ENCODE measurements at regions of chr17 and their contacts with region 1.

Region 1: DNA sequence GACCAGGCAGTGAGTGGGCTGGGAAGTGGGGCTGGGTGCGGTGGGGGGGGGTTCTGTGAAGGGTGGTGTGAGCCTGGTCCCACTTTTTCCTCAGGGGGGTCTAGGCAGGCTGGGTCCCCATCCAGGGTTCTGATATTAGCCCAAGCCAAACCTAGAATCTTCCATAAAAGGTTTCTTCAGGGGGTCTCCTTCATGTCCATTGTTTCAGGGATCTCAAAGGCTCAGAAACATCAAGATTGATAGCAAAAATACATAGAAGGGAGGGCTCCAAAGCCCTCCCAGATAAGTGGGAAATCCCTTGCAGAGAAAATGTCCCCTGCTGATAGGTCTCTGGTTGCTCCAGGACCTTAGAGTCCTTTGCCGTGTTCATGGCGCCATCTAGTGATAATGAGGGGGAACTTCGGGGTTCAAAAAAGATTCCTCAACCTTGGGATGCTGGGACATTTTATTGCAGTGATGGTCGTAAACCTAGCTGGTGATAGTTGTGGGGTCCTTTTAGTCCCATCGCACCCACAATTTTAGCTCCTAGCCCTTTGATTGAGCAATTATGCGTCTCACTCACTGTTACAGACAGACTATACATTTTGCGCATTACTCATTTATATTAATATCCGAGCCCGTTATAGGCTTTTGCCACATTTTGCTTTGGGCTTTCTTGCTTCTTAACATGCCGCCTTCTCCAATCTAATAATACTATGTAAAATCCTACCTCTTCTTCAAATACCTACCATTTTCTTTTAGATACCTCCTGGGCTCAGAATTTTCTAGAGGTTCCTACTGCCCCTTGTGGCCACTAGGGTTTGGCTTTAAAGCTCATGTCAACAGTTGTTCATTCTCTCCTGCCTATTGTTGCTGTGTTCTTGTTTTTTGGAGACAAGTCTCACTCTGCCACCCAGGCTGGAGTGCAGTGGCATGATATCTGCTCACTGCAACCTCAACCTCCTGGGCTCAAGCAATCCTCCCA is 35.1 kb downstream of the IGF2BP1 start:
- DNase-seq: no peak
- H3K4me3 ChIP-seq: no peak overlapping the region
- CTCF ChIP-seq: peak; percentile 73

Region 2: DNA sequence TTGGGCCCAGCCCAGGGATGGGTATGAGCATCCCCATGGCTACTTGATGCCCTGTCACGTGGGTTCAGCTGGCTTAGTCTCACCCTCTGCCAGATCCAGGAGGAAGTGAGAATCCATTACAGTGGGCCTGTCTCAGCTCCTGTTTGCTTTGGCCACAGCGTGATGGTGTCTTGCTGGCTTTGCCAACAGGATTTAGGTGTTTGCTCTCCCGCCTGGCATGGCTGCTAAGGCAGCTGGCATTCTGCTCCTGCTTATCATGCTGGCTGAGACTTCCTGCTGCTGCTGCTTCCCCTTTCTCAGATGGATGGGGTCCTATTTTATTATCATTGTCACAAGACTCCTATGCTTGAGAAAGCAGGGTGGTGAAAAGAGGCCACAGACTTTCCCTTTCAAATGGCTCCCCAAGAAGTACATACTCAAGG is 275.4 kb before region 1 on chr17:
- CTCF ChIA-PET with region 1: no interaction called
- POLR2A ChIA-PET with region 1: no interaction called
- DNase-seq: no peak
- H3K4me3 ChIP-seq: no peak overlapping the region
- CTCF ChIP-seq: no peak

Region 3: DNA sequence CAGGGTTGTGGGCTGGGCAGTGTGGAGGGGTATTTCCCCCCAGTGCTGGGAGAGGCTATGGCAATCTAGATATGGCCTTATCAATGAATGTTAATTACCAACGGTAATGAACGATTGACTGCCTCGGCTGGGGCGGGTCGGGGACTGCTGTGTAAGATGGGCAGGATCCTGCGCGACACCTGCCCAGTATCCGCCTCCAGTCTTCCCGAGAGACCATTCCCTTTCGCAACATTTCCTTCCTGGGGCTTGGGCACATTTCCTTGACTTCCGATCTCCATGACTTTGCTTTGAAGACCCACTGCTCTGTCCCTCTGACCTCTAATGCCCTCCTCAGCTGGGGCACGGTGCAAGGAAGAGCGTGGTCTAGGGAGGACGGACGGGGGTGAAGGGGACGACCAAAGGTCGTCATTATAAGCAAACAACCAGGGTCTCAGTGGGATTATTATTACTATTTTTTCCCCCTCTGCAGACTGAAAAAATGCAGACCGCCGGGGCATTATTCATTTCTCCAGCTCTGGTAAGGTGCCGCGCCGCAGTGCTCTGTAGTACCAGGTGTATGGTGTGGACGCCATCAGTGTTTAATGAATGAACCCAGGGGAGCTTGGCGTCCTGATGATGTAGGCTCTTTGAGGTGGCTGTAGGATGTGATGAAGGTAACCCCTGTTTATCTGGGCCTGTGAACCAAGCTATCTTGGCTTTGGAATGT is 139.2 kb before region 1 on chr17:
- CTCF ChIA-PET with region 1: interaction called, 22 read pairs
- POLR2A ChIA-PET with region 1: no interaction called
- DNase-seq: no peak
- H3K4me3 ChIP-seq: peak overlapping the region; percentile 97
- CTCF ChIP-seq: no peak

Region 4: GRCh38 chr17:48915459-48916282 is 116.6 kb before region 1 on chr17:
- CTCF ChIA-PET with region 1: interaction called, 10 read pairs
- POLR2A ChIA-PET with region 1: no interaction called
- DNase-seq: peak; percentile 72
- H3K4me3 ChIP-seq: peak overlapping the region; percentile 20; the same call in 1 of the 2 replicates
- CTCF ChIP-seq: no peak

Region 5: DNA sequence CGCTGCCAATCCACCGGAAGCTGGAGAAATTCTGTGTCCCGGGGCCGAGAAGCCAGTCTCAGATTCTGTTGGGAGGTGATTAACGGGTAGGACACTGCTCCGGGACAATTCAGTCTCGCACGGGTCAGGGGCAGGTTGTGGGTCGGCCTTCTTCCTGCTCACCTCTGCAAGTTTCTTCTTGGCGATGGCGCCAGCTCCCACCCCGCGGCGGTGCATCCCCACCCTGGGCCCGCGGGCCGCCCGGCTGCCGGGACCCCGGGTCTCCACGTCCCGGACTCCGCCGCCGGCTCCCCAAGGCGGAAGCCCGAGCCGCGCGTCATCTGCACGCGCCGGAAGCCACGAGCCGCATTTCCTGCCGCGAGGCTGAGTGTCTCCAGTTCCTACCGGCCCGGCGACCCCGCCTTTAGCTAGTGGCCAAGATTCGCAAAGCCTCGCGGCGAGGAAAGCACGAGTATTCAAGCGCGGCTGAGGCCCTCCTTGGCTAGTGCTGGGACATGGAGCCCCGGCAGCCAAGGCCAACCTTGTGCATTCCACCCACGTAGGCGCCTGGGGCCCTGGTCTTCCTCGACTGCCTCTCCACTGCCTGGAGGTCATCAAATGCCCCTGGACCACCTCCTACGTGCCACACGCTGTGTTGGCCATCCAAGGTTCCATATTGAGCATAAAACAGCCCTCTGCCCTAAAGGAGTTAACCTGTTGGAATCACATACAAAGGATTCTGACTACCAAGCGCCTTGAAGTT is 87.6 kb before region 1 on chr17 and contains the start of gene SNF8:
- CTCF ChIA-PET with region 1: interaction called, 112 read pairs
- POLR2A ChIA-PET with region 1: interaction called, 3 read pairs
- DNase-seq: peak; percentile 21
- H3K4me3 ChIP-seq: peak within 1 kb of the TSS; percentile 76
- CTCF ChIP-seq: no peak

Region 6: GRCh38 chr17:48961516-48962233 is 70.6 kb before region 1 on chr17:
- CTCF ChIA-PET with region 1: interaction called, 39 read pairs
- POLR2A ChIA-PET with region 1: no interaction called
- DNase-seq: no peak
- H3K4me3 ChIP-seq: no peak overlapping the region
- CTCF ChIP-seq: no peak

Region 7: GRCh38 chr17:49016788-49017463 is 15.3 kb before region 1 on chr17:
- CTCF ChIA-PET with region 1: interaction called, 46 read pairs
- POLR2A ChIA-PET with region 1: no interaction called
- DNase-seq: no peak
- H3K4me3 ChIP-seq: no peak overlapping the region
- CTCF ChIP-seq: no peak

Region 8: DNA sequence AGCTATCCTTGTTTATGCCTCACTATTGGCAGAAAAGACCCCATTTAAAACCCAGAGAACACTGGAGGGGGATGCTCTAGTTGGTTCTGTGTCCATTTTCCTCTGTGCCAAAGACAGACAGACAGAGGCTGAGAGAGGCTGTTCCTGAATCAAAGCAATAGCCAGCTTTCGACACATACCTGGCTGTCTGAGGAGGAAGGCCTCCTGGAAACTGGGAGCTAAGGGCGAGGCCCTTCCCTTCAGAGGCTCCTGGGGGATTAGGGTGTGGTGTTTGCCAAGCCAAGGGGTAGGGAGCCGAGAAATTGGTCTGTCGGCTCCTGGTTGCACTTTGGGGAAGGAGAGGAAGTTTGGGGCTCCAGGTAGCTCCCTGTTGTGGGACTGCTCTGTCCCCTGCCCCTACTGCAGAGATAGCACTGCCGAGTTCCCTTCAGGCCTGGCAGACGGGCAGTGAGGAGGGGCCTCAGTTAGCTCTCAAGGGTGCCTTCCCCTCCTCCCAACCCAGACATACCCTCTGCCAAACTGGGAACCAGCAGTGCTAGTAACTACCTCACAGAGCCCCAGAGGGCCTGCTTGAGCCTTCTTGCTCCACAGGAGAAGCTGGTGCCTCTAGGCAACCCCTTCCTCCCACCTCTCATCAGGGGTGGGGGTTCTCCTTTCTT is 21.1 kb after region 1 on chr17:
- CTCF ChIA-PET with region 1: interaction called, 14 read pairs
- POLR2A ChIA-PET with region 1: no interaction called
- DNase-seq: no peak
- H3K4me3 ChIP-seq: no peak overlapping the region
- CTCF ChIP-seq: no peak

Region 9: GRCh38 chr17:49370971-49371834 is 339.0 kb after region 1 on chr17:
- CTCF ChIA-PET with region 1: no interaction called
- POLR2A ChIA-PET with region 1: no interaction called
- DNase-seq: no peak
- H3K4me3 ChIP-seq: no peak overlapping the region
- CTCF ChIP-seq: no peak

Measured in AG04449 (cell line).